Astrocyte of the cerebellum (primary cell): ENCODE measurements at regions of chr3 and their contacts with region 1.

Region 1: GRCh38 chr3:132029182-132029902 is 5.5 kb downstream of the CPNE4 start:
- DNase-seq: peak; percentile 62
- H3K4me3 ChIP-seq: no peak overlapping the region
- CTCF ChIP-seq: peak; percentile 90

Region 2: DNA sequence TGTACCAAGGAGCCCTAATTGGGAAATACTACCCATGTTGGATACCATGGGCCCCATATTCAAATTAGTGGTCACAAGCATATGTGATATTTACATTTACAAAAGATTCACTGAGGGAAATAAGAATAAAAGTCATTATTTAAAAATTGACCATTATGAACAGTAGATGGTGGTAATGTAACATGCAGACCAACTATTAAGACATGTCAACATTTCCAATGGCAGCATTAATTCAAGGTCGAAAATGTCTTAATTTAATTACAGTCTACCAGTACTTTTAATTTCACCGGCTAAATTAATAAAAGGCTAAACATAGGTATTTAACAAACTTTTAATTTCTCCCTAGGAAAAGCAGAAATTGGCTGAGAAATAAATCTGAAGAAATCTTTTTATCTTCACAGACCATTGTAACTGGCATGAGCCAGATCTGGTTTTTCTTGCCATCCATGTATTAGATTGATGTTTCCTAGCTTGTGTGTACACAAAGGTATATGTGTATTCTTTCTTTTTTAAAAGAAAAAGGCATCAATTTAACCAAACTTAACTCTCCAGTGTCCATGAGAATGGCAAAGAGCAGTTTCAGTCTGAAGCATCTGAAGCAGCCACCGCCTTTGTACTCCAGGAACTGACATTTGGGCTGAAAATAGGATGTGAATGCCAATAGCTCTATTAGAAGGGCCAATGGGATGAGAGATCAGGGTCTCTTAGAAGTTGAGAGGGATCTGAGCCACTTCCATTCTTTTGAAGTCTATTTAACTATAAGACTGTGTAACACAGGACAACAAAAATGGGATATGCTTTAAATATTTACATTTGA is 976.1 kb before region 1 on chr3:
- in situ Hi-C with region 1: loop called (anchors 25 kb)
- DNase-seq: peak; percentile 23
- H3K4me3 ChIP-seq: no peak overlapping the region
- CTCF ChIP-seq: peak; percentile 34

Region 3: DNA sequence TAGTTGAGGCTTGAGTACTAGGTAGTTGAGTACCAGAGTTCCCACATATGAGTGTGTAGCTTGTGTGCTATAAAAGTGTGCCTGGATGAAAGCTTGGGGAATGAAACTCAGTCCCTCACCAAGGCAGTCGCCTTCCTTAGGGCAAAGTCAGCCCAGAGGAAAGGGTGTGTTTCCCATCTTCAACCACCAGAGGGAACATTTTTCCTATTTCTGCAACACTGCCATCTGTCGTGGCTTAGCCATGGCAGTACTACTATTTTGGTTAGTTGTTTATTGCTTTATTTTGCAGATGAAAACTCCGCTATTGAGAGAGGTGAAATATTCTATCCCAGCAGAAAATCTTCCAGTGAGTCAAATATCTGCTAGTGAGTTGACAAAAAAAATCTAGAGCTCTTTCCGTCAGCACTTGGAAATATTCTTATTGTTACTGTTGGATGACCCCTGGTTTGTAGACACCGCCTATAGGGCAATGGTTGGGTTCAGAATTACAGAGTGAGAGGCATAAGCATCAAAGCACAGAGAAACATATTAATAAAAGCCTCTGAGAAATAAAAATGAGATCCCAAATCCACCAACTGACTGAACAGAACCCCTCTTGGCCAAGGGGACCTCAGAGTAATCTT is 234.5 kb before region 1 on chr3:
- in situ Hi-C with region 1: loop called (anchors 5 kb)
- DNase-seq: peak; percentile 44
- H3K4me3 ChIP-seq: no peak overlapping the region
- CTCF ChIP-seq: peak; percentile 88

Region 4: DNA sequence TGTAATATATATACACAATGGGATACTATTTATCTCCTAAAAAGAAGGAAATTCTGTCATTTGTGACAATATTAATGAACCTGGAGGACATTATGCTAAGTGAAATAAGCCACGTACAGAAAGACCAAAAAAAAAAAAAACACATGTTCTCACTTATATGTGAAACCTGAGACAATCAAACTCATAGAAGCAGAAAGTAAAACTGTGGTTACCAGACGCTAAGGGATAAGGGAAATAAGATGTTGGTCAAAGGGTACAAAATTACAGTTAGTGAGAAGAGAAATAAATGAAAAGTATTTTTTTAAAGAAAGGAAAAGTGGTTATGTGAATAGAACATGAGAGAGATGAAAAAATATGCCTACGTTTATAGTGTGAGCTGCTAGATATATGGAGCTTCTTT is 95.7 kb before region 1 on chr3:
- in situ Hi-C with region 1: no loop called
- DNase-seq: no peak
- H3K4me3 ChIP-seq: no peak overlapping the region
- CTCF ChIP-seq: no peak

Region 5: DNA sequence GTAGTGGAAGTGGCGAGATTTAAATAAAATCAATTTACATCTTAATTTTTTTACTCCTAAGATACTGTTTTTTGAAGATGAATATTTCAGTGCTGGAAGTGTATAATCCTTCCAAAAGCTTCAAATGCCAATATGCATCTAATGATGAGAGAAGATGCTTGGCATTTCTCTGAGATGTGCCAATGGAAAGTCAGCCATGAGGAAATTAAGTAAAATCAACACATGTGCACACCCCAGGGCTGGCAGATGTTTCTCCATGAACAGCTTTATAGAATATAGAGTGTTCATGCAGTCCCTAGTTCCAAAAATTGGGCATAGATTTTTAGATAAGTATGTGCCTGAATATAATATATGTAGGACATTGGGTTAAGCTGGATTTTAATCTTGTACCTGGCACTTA is 84.7 kb before region 1 on chr3:
- in situ Hi-C with region 1: no loop called
- DNase-seq: no peak
- H3K4me3 ChIP-seq: no peak overlapping the region
- CTCF ChIP-seq: no peak